ENCODE measurements at regions of chr9 and their contacts with region 1.

Region 1: DNA sequence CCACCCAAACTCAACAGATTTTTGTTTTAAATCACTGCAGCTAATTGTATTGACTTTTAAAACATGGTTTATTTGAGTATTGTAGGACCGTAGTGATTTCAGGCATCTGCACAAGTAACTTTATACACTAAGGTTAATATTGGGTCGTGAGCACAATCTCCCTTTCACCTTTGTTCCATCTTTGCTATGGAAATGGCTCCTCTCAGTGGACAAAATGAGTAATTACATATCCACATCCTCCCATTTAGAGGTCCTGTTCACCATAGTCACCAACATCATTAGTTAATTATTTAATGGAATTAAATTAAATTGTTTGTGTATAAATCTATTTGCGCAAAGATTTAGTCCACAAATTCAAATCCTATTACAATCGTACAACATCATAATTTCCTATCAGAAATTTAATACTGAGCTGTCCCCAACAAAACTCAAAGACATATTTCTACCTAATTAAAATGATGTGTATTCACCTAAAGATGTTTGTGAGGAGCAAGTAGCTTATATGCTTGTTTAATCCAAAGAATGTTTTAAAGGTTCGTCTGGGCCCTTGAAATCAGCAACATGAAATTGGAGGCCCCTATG is 173.0 kb upstream of the DAPK1 start:
- DNase-seq: peak in 1 of 4 donors; percentile 8
- ATAC-seq: peak; percentile 81
- H3K4me3 ChIP-seq: no peak overlapping the region
- H3K27ac ChIP-seq: no peak overlapping the region
- H3K4me1 ChIP-seq: no peaks in the 10 kb centered on the region
- H3K27me3 ChIP-seq: no peaks in the 10 kb centered on the region
- CTCF ChIP-seq: peak; percentile 41 to 91 (median 88)
- POLR2A ChIP-seq: no peak

Region 2: GRCh38 chr9:86434039-86434726 is 890.5 kb before region 1 on chr9:
- intact Hi-C with region 1: loop called (anchors 10 kb)
- DNase-seq: peak in 2 of 4 donors; percentile 17 to 40
- ATAC-seq: peak; percentile 77
- H3K4me3 ChIP-seq: no peak overlapping the region
- H3K27ac ChIP-seq: no peak overlapping the region
- H3K4me1 ChIP-seq: no peaks in the 10 kb centered on the region
- H3K27me3 ChIP-seq: no peaks in the 10 kb centered on the region
- CTCF ChIP-seq: peak; percentile 44 to 90 (median 81)
- POLR2A ChIP-seq: no peak

Region 3: DNA sequence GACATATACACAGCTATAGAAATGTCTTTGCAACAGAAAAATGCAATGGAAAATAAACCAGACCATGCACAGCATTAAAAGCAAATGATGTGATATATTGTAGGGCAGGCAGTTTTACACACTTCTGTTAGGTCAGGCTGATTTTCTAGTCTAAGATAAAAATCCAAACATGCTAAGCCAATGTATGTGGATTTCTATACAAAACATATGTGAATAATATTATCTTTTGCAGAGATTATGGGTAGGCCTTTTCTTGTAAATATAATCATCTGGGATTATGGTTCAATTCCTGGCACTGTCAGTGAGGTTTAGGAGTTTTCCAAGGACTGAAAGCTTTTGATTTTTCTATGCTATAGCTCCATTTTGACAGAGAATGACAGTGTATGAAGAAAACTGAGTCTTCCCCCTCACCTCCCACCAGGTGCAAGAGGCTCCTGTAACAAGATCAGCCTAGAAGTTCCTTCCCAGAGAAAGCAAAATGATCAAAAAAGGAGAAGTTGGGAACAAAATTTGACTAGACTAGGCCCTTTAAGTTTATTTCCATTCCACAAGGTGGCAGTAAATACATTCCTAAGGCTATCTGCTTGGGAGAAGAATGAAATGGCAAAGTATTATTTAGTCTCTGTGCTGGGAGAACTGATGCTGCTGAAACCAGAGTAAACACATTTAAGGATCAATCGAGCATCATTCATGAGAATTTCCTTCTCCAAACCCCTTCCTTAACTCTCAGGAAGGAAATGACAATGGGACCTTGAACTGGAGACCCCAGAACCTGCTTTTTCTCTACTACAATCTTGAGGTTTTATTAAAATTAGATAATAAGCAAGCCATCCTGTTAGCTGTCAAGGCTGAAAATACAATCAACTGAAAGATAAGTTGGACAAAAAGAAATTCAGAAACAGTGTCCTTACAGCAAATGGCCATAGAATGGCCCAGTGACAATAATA is 837.5 kb before region 1 on chr9:
- intact Hi-C with region 1: loop called (anchors 5 kb)
- DNase-seq: no peak
- ATAC-seq: peak; percentile 77
- H3K4me3 ChIP-seq: no peak overlapping the region
- H3K27ac ChIP-seq: no peak overlapping the region
- H3K4me1 ChIP-seq: no peaks in the 10 kb centered on the region
- H3K27me3 ChIP-seq: no peaks in the 10 kb centered on the region
- CTCF ChIP-seq: peak; percentile 19 to 81 (median 77)
- POLR2A ChIP-seq: no peak

Region 4: DNA sequence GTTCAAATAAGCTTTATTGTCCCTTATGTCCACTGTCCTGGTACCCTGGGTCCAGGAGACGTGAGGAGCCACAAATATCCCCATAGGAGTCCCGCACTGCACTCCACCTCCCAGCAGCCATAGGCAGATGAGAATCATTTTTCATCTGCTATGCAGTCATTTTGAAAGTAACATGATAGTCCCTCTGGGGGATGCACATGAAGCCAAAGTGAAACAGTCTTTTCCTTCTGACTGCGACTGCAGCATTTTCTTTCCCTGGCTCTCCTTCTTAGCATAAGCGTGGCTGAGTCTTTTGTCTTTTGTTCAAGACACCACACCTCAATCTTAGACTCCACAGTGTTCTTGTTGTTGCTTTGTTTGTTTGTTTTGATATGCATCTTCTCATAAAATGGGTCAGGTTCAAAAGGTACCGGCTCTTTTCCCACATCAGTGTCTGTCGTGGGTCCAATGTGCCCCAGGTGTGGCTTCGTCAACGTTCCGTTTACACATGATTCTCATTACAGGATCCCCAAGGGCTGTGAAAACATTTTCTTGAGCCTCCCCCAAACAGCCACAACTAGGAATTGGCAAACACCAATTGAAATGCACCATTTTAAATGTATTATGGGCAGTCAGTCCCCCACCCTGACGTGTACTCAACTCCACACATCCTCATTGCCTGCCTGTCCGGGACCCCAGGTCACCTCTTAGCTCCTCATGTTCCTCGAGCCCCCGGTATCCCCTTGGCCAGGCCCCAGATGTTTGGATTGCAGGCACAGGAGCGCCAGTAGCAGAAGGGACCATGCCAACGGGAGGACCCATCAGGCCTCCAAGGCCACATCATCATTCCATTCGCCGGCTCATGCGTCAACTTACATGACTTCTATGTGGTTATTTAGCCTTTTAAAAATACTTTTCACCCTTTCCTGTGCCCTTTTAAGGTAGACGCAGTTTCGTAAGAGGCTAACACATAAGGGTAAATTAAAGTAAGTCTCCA is 64.9 kb before region 1 on chr9:
- intact Hi-C with region 1: no loop called
- DNase-seq: no peak
- ATAC-seq: no peak
- H3K4me3 ChIP-seq: no peak overlapping the region
- H3K27ac ChIP-seq: no peak overlapping the region
- H3K4me1 ChIP-seq: no peaks in the 10 kb centered on the region
- H3K27me3 ChIP-seq: no peaks in the 10 kb centered on the region
- CTCF ChIP-seq: no peak
- POLR2A ChIP-seq: no peak

Measured in body of pancreas (tissue), 4 donors.